ENCODE measurements at regions of chr1 and their contacts with region 1.

Region 1: GRCh38 chr1:231528172-231529029 is at the start of gene TSNAX:
- DNase-seq: peak; percentile 92
- H3K4me3 Mint-ChIP-seq: peak within 1 kb of the TSS; percentile 97
- H3K27ac Mint-ChIP-seq: peak within 1 kb of the TSS; percentile 99
- H3K4me1 Mint-ChIP-seq: peaks cover 46% of the 10 kb centered on the region
- H3K27me3 Mint-ChIP-seq: no peaks in the 10 kb centered on the region
- total RNA-seq, gene TSNAX: 36.4 to 36.5 TPM

Region 2: DNA sequence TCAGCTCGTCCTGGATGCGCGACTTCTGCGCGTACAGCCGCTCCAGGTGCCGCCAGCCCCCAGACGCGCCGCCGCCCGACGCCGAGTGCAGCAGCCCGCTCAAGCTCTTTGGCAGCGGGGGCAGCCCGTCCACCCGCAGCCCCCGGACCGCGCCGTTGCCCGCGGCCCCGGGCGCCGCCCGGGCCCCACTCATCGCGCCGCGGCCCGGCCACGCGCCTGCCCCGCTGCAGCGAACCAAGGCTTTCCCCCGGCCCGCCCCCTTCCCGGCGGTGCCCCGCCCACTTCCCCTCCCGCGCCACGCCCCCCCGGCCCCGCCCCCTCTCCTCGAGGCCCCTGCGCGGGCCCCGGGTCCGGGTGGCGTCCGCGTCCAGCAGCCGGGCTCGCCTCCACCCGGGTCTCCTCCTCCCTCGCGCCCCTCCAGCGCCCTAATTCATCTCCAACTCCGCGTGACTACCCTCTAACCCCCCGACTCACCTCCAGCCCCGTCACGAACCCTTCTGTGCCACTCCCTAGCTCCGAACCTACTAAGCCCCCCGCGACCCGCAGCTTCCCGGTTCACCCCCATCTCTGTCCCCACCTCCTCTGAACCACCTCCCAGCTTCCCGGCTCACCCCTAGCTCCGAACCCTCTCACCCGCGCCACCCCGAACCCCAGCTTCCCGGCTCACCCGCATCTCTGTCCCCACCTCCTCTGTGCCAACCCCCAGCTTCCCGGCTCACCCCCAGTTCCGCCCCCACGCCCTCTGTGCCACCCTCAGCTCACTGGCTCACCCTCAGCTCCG is 488.2 kb before region 1 on chr1 and contains the start of gene FAM89A:
- CTCF ChIA-PET with region 1: no interaction called
- POLR2A ChIA-PET with region 1: no interaction called
- intact Hi-C with region 1: loop called (anchors 10 kb)
- DNase-seq: peak; percentile 81
- H3K4me3 Mint-ChIP-seq: peak within 1 kb of the TSS; percentile 74
- H3K27ac Mint-ChIP-seq: no peak within 1 kb of the TSS
- H3K4me1 Mint-ChIP-seq: peaks cover 29% of the 10 kb centered on the region
- H3K27me3 Mint-ChIP-seq: no peaks in the 10 kb centered on the region
- total RNA-seq, gene FAM89A: 14.3 to 15.1 TPM

Region 3: DNA sequence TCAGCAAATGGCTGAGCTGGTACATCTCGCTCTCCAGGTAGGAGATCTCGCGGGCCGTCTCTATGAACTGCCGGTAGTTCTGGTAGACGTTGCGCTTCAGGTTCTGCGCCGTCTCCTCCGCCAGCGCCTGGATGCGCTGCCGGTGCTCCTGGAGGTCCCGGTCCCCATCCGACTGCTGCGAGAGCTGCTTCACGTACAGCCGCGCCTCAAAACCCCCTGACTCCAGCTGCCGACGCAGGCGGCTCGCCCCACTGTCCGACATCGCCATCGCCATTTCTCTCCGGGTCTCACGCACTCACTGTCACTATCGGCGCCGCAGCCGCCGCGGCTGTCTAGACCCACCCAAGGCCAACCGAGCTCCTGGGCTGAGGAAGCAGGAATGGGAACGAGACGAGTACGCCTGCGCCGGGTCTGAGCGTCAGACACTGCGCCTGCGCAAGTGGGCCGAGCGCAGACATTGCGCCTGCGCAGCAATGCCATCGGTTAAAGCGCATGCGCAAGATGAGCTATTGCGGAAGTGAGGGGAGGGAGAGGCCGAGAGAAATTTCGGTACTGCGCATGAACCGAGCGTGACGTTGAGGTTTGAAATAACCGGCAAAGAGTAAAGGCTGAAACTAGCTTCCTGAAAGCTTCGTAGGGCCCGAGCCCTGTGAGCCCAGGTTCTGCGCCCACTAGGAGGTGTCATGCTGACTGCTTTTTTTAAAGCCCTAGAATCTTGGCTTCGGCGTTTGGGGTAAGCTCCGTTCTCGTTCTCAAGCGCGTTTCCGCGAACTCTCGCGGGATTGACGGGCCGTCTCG is 190.7 kb before region 1 on chr1 and contains the start of gene EXOC8:
- CTCF ChIA-PET with region 1: interaction called, 5 read pairs
- POLR2A ChIA-PET with region 1: interaction called, 4 read pairs
- intact Hi-C with region 1: loop called (anchors 1 kb)
- DNase-seq: peak; percentile 98
- H3K4me3 Mint-ChIP-seq: peak within 1 kb of the TSS; percentile 100
- H3K27ac Mint-ChIP-seq: peak within 1 kb of the TSS; percentile 98
- H3K4me1 Mint-ChIP-seq: peaks cover 54% of the 10 kb centered on the region
- H3K27me3 Mint-ChIP-seq: peaks cover 3% of the 10 kb centered on the region
- total RNA-seq, gene EXOC8: 14.4 to 15.2 TPM

Region 4: DNA sequence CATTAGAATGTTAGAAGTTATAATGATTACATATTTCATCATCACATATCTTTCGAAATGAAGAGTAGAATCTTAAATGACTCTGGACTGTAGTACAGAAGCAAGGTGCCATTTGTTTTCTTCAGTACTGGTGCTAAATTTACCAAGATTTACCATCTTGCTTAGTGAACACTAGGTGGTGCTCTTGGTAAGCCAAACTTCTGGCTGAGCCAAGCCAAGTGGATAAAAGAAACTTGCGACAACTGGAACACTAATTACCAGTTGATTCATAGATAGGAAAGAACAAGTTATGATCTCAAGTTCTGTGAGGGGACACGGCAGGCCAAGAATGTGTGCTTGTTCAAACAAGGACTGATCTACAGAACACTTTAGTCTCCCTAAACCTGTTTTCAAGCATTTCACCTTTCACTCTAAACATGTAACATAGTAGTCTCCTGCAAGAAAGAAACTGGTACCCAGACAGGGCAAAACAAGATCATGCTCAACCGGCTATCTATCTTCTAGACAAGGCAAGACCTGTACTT is 170.5 kb before region 1 on chr1:
- CTCF ChIA-PET with region 1: interaction called, 3 read pairs
- POLR2A ChIA-PET with region 1: no interaction called
- intact Hi-C with region 1: loop called (anchors 5 kb)
- DNase-seq: peak; percentile 40
- H3K4me3 Mint-ChIP-seq: no peak overlapping the region
- H3K27ac Mint-ChIP-seq: peak overlapping the region; percentile 25
- H3K4me1 Mint-ChIP-seq: peaks cover 4% of the 10 kb centered on the region
- H3K27me3 Mint-ChIP-seq: no peaks in the 10 kb centered on the region

Region 5: DNA sequence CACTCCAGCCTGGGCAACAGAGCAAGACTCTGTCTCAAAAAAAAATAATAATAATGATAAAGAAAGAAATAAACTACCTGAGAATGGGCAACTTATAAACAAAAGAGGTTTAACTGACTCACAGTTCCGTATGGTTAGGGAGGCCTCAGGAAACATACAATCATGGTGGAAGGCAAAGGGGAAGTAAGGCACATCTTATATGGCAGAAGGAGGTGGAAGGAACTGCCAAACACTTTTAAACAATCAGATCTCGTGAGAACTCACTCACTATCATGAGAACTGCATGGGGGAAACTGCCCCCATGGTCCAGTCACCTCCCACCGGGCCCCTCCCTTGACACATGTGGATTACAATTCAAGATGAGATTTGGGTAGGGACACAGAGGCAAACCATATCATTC is 100.0 kb before region 1 on chr1:
- CTCF ChIA-PET with region 1: no interaction called
- POLR2A ChIA-PET with region 1: no interaction called
- intact Hi-C with region 1: no loop called
- DNase-seq: no peak
- H3K4me3 Mint-ChIP-seq: no peak overlapping the region
- H3K27ac Mint-ChIP-seq: no peak overlapping the region
- H3K4me1 Mint-ChIP-seq: no peaks in the 10 kb centered on the region
- H3K27me3 Mint-ChIP-seq: peaks cover 11% of the 10 kb centered on the region

Region 6: DNA sequence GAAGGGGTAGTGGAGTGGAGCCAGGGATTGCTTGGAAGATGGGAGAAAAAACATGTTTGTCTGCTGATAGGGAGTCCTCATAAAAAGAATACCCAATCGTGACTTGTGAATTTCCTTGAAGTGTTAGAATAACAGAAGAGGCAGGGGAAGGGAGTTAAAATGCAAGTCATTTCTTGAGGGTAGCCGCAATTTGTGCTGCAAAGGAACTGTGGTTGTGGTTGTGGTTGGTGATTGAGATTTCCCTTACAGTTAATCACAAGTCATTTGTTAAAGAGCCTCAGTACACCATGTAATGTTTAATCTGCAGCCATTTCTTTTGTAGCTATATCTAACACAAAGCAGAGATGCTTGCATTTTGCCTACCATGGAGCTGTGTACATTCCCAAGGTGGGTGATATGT is 67.8 kb before region 1 on chr1:
- CTCF ChIA-PET with region 1: no interaction called
- POLR2A ChIA-PET with region 1: no interaction called
- intact Hi-C with region 1: loop called (anchors 2 kb)
- DNase-seq: peak; percentile 77
- H3K4me3 Mint-ChIP-seq: no peak overlapping the region
- H3K27ac Mint-ChIP-seq: peak overlapping the region; percentile 23
- H3K4me1 Mint-ChIP-seq: peaks cover 27% of the 10 kb centered on the region
- H3K27me3 Mint-ChIP-seq: peaks cover 61% of the 10 kb centered on the region

Region 7: GRCh38 chr1:231512147-231512698 is 16.2 kb before region 1 on chr1:
- CTCF ChIA-PET with region 1: no interaction called
- POLR2A ChIA-PET with region 1: no interaction called
- intact Hi-C with region 1: no loop called
- DNase-seq: no peak
- H3K4me3 Mint-ChIP-seq: no peak overlapping the region
- H3K27ac Mint-ChIP-seq: no peak overlapping the region
- H3K4me1 Mint-ChIP-seq: peaks cover 12% of the 10 kb centered on the region
- H3K27me3 Mint-ChIP-seq: peaks cover 11% of the 10 kb centered on the region

Region 8: GRCh38 chr1:231603598-231604275 is 75.3 kb after region 1 on chr1:
- CTCF ChIA-PET with region 1: interaction called, 4 read pairs
- POLR2A ChIA-PET with region 1: no interaction called
- intact Hi-C with region 1: loop called (anchors 5 kb)
- DNase-seq: peak; percentile 42
- H3K4me3 Mint-ChIP-seq: peak overlapping the region; percentile 84
- H3K27ac Mint-ChIP-seq: peak overlapping the region; percentile 66
- H3K4me1 Mint-ChIP-seq: peaks cover 5% of the 10 kb centered on the region
- H3K27me3 Mint-ChIP-seq: no peaks in the 10 kb centered on the region

Region 9: DNA sequence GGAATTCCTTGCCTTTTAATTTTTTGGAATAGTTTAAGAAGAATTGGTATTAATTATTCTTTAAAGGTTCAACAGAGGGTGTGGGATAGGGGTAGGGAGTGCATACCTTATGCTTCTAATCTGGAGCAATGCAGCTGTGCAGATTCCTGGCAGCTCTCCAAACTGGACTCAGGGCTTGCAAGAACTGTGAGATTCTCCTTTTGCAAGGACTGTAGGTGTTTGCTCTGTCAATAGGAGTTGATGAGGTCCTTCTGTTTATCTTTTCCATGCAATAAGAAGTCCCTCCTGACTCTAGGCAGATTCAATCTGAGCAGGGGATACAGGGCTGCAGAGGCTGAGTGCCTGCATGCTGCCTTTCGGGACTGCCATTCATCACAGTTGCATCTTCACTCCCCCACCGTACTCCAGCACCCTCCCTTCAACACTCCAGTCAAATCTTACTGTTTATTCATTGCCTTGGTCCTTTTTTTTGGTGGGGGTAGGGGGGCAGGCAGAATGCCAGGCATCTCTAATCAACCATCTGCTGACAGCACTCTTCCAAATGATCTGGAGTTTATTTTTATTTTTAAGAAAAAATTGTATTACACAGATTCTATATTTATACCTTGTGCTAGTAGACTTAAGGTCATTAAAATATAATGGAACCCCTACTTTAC is 220.5 kb after region 1 on chr1:
- CTCF ChIA-PET with region 1: no interaction called
- POLR2A ChIA-PET with region 1: no interaction called
- intact Hi-C with region 1: no loop called
- DNase-seq: no peak
- H3K4me3 Mint-ChIP-seq: no peak overlapping the region
- H3K27ac Mint-ChIP-seq: no peak overlapping the region
- H3K4me1 Mint-ChIP-seq: no peaks in the 10 kb centered on the region
- H3K27me3 Mint-ChIP-seq: no peaks in the 10 kb centered on the region